ENCODE measurements at regions of chr3 and their contacts with region 1.

Region 1: GRCh38 chr3:184711493-184712247 is at the start of gene MAGEF1:
- H3K4me3 ChIP-seq: peak within 1 kb of the TSS; percentile 98
- H3K27ac ChIP-seq: peak within 1 kb of the TSS; percentile 91
- H3K4me1 ChIP-seq: peaks cover 5% of the 10 kb centered on the region
- CTCF ChIP-seq: no peak; the same call in none of the 2 replicates

Region 2: DNA sequence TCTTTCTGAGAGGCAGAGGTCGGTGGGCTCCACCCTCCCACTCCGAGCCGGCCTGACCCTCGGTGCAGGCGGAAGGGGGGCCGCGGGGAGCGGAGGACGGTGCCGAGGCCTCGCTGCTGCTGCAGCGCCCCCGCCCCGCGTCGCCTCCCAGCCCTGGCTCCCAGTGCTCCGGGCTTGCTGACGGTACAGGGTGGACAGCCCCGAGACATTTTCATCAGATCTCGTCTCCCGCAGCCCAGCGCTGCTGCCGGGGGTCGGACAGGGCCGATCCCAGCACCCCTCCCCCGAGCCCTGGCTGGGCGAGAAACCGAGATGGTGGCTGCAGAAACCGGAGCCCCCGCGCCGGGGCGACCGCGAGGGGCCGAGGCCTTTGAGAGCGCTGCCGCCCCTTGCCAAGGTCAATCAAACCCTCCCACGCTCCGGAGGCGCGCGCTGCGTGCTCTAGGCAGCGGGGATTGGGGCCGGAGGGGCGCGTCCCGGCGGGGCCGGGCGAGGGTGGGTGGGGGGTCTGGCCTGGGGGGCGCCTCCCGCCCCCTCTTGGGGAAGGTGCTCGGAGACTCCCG is 107.5 kb before region 1 on chr3:
- CTCF ChIA-PET with region 1: no interaction called
- POLR2A ChIA-PET with region 1: no interaction called
- H3K4me3 ChIP-seq: no peak overlapping the region
- H3K27ac ChIP-seq: no peak overlapping the region
- H3K4me1 ChIP-seq: no peaks in the 10 kb centered on the region
- CTCF ChIP-seq: no peak

Region 3: GRCh38 chr3:184696697-184697096 is 15.0 kb before region 1 on chr3:
- CTCF ChIA-PET with region 1: interaction called, 4 read pairs
- POLR2A ChIA-PET with region 1: interaction called, 16 read pairs
- H3K4me3 ChIP-seq: no peak overlapping the region
- H3K27ac ChIP-seq: no peak overlapping the region
- H3K4me1 ChIP-seq: no peaks in the 10 kb centered on the region
- CTCF ChIP-seq: no peak